Gastrocnemius medialis (tissue), 4 donors: ENCODE measurements at regions of chr3 and their contacts with region 1.

Region 1: GRCh38 chr3:11379233-11379823 is 107.1 kb downstream of the ATG7 start:
- DNase-seq: no peak
- ATAC-seq: peak; percentile 49 to 52
- H3K4me3 ChIP-seq: peak overlapping the region in 2 of 4 donors; percentile 4 to 5
- H3K27ac ChIP-seq: peak overlapping the region; percentile 73 to 81 (median 76)
- H3K4me1 ChIP-seq: peaks cover 32 to 44% of the 10 kb centered on the region in 2 donors
- H3K27me3 ChIP-seq: no peaks in the 10 kb centered on the region
- CTCF ChIP-seq: peak; percentile 63 to 80 (median 68)
- POLR2A ChIP-seq: no peak

Region 2: GRCh38 chr3:11221818-11222415 is 157.4 kb before region 1 on chr3:
- in situ Hi-C with region 1: no loop called
- intact Hi-C with region 1: no loop called
- DNase-seq: no peak
- ATAC-seq: no peak
- H3K4me3 ChIP-seq: no peak overlapping the region
- H3K27ac ChIP-seq: no peak overlapping the region
- H3K4me1 ChIP-seq: no peaks in the 10 kb centered on the region
- H3K27me3 ChIP-seq: no peaks in the 10 kb centered on the region
- CTCF ChIP-seq: no peak
- POLR2A ChIP-seq: no peak

Region 3: GRCh38 chr3:11362600-11362999 is 16.7 kb before region 1 on chr3:
- in situ Hi-C with region 1: no loop called
- intact Hi-C with region 1: no loop called
- DNase-seq: no peak
- ATAC-seq: no peak
- H3K4me3 ChIP-seq: no peak overlapping the region
- H3K27ac ChIP-seq: no peak overlapping the region
- H3K4me1 ChIP-seq: peaks cover 19 to 23% of the 10 kb centered on the region in 2 donors
- H3K27me3 ChIP-seq: no peaks in the 10 kb centered on the region
- CTCF ChIP-seq: no peak
- POLR2A ChIP-seq: no peak

Region 4: GRCh38 chr3:11509173-11510000 is 130.1 kb after region 1 on chr3:
- in situ Hi-C with region 1: loop called in 1 of 4 experiments (anchors 25 kb)
- intact Hi-C with region 1: loop called (anchors 5 kb)
- DNase-seq: peak; percentile 32 to 59
- ATAC-seq: peak; percentile 86 to 89
- H3K4me3 ChIP-seq: peak overlapping the region in 2 of 4 donors; percentile 0 to 15
- H3K27ac ChIP-seq: peak overlapping the region; percentile 76 to 92 (median 87)
- H3K4me1 ChIP-seq: peaks cover 28 to 31% of the 10 kb centered on the region in 2 donors
- H3K27me3 ChIP-seq: no peaks in the 10 kb centered on the region
- CTCF ChIP-seq: peak in 2 of 5 experiments; percentile 10 to 23
- POLR2A ChIP-seq: no peak

Region 5: DNA sequence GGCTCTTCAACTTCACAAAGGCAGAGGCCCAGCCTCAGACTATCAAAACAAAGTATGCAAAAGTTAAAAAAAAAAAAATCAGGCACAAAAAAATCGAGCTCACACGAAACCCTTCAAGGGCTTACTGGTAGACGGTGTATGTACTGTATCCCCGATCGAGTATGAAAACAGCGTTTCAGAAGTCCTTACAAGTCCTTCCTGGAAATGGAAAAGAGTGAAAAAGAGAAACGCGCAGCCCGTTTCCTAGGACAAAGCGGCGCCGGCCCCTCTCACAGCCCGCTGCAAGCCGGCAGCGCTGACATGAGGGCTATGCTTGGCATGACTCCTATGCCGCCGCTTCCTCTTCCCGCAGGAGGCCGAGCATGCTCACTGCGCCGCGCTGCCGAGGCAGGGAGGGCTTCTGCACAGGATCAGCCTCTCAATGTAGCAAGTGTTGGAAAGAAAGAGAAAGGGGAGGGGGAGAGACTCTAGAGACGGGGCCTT is 264.3 kb after region 1 on chr3 and contains the start of gene VGLL4:
- in situ Hi-C with region 1: no loop called
- intact Hi-C with region 1: loop called (anchors 2 kb)
- DNase-seq: peak; percentile 83 to 86
- ATAC-seq: peak; percentile 68 to 70
- H3K4me3 ChIP-seq: peak within 1 kb of the TSS; percentile 54 to 74 (median 70)
- H3K27ac ChIP-seq: peak within 1 kb of the TSS; percentile 90 to 95 (median 92)
- H3K4me1 ChIP-seq: peaks cover 28 to 32% of the 10 kb centered on the region in 2 donors
- H3K27me3 ChIP-seq: no peaks in the 10 kb centered on the region
- CTCF ChIP-seq: peak in 3 of 5 experiments; percentile 10 to 33 (median 16)
- POLR2A ChIP-seq: peak; percentile 77 to 88
- total RNA-seq, gene VGLL4: 8.9 to 20.9 (median 12.8) TPM

Region 6: GRCh38 chr3:11719406-11720230 is 340.3 kb after region 1 on chr3:
- in situ Hi-C with region 1: no loop called
- intact Hi-C with region 1: loop called (anchors 5 kb)
- DNase-seq: peak; percentile 5 to 21
- ATAC-seq: peak; percentile 44 to 61
- H3K4me3 ChIP-seq: peak overlapping the region; percentile 62 to 95 (median 76)
- H3K27ac ChIP-seq: peak overlapping the region; percentile 65 to 82 (median 78)
- H3K4me1 ChIP-seq: peaks cover 7 to 10% of the 10 kb centered on the region in 2 donors
- H3K27me3 ChIP-seq: peaks cover 0 to 2% (median 0%) of the 10 kb centered on the region in 3 donors
- CTCF ChIP-seq: no peak
- POLR2A ChIP-seq: no peak

Region 7: DNA sequence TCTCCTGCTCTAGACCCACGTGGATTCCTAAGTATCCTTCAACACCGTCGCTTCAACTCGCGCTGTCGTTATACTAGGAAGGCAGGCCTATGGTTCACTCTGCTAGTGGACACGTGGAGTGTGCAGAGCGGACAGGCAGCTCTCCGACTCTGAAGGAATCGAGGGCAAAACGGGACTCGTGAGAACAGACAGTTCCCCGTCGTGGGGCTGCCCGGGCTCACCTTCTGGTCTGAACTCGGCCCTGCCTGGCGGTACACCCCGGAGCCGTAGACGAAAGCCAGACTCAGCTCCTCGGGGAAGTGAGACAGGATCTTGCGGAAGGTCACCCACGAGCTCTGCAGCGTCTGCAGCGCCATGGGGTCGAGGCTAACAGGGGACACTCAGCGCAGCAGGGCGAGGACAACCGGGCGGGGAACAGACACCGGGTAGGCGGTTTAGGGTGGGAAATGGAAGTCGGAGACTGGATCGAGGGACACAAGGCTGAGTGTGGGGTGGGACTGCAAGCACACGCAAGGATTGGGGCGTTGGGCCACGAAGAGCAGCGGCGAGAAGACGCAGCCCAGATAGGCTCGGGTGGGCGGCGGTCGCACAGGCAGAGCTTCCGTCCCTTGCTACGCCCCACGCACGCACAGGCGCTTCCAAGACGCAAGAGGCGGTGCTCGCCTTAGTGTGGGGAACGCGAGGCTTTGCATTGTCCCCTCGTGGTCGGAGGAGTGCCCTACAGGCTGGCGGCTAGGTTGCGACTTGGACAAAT is 467.1 kb after region 1 on chr3 and contains the start of gene TAMM41:
- in situ Hi-C with region 1: no loop called
- intact Hi-C with region 1: loop called (anchors 5 kb)
- DNase-seq: peak; percentile 87 to 89
- ATAC-seq: peak; percentile 98 to 99
- H3K4me3 ChIP-seq: peak within 1 kb of the TSS; percentile 78 to 96 (median 92)
- H3K27ac ChIP-seq: peak within 1 kb of the TSS; percentile 86 to 93 (median 92)
- H3K4me1 ChIP-seq: peaks cover 21 to 24% of the 10 kb centered on the region in 2 donors
- H3K27me3 ChIP-seq: no peaks in the 10 kb centered on the region
- CTCF ChIP-seq: peak; percentile 62 to 90 (median 76)
- POLR2A ChIP-seq: peak; percentile 44 to 57
- total RNA-seq, gene TAMM41: 2.1 to 9.7 (median 3.8) TPM